Posterior cingulate gyrus (tissue), 11 donors: ENCODE measurements at regions of chr5 and their contacts with region 1.

Region 1: DNA sequence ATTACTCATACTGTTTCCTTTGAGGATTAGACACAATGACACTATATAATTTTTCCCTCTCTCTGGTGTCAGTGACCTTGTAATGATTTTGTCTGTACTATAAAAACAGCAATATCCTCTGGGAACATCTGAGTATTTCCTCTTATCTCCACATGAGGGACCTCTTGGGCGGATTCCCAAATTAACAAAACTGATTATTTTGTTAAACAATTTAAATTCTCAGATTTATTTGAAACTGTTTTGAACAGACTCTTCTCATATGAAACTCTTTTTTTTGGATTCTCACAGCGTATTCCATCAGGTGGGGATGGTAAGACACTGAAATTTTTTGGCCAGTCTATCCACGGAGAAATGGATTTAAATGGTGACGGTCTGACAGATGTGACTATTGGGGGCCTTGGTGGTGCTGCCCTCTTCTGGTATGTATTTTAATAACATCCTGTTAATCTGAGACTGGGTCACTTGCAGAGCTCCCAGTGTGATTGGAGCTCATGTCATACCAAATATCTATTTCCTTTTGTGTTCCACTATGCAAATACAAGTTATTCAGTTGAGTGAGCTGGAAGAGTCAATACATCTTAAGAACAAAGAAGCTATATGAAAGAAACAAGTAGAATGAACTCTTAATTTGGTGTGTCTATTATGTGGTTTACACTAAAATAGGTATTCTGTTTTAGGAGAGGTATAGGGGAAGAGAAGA is 73.8 kb upstream of the ITGA2 start:
- DNase-seq: peak in 1 of 10 donors; percentile 35

Region 2: GRCh38 chr5:52665559-52665958 is 249.8 kb before region 1 on chr5:
- intact Hi-C with region 1: loop called (anchors 10 kb)
- DNase-seq: no peak

Region 3: GRCh38 chr5:52693280-52693679 is 222.0 kb before region 1 on chr5:
- intact Hi-C with region 1: loop called (anchors 10 kb)
- DNase-seq: peak in 1 of 10 donors; percentile 41

Region 4: GRCh38 chr5:52799983-52800393 is 115.3 kb before region 1 on chr5:
- intact Hi-C with region 1: loop called (anchors 5 kb)
- DNase-seq: peak; percentile 89 to 99 (median 95)